WTC11 (cell line): ENCODE measurements at regions of chr1 and their contacts with region 1.

Region 1: GRCh38 chr1:205658943-205659581 is 21.2 kb downstream of the SLC45A3 start:
- DNase-seq: peak; percentile 91
- ATAC-seq: peak; percentile 84
- H3K4me3 Mint-ChIP-seq: no peak overlapping the region
- H3K27ac Mint-ChIP-seq: peak overlapping the region; percentile 88; the same call in 1 of the 2 replicates
- H3K4me1 Mint-ChIP-seq: peaks cover 35% of the 10 kb centered on the region
- H3K27me3 Mint-ChIP-seq: no peaks in the 10 kb centered on the region
- CTCF ChIP-seq: peak; percentile 83

Region 2: DNA sequence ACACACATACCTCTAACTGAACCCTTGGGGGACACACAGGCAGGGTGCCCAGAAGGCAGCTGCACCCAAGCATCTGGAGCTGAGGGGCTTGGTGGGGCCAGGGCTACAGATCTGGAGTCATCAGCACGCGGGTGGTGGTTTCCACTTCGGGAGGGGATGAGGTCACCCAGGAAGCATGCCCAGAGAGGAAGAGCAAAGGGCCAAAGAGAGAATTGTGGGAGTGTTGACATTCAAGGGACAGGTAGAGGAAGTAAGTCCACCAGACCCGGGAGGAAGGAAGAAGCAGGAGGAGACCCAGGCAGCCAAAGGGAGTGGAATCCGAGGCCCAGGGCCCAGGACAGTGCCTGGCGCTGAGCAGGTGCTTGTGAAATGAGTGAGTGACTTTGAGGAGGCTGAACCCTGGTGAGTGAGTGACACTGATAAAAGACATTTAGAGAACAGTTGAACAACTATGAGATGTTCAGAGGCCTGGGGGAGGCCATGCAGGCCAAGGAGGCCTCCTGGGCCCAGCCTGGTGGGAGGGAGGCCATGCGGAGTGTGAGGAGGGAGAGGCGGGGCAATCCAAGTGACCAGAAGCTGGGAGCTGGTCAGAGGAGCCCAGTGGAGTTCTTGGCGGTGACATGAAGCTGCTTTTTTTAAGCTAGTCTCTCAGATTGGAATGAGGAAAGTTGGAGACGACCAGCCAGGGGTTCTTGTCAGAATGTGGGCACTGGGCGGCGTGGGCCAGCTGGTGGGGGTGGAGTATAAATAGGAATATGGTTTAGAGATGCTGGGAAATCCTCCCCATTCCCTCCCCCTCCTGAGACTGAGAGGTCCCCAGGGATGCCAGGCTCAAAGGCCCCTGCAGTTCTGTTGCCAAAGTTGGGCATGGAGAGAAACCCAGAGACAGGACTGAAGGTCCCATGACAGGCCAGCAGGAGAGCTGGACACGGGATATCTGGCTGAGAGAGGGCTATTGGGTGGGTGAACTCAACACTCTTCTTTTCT is 146.7 kb before region 1 on chr1:
- CTCF ChIA-PET with region 1: no interaction called
- POLR2A ChIA-PET with region 1: no interaction called
- DNase-seq: no peak
- ATAC-seq: no peak
- H3K4me3 Mint-ChIP-seq: no peak overlapping the region
- H3K27ac Mint-ChIP-seq: peak overlapping the region; percentile 51
- H3K4me1 Mint-ChIP-seq: peaks cover 53% of the 10 kb centered on the region
- H3K27me3 Mint-ChIP-seq: no peaks in the 10 kb centered on the region
- CTCF ChIP-seq: no peak

Region 3: DNA sequence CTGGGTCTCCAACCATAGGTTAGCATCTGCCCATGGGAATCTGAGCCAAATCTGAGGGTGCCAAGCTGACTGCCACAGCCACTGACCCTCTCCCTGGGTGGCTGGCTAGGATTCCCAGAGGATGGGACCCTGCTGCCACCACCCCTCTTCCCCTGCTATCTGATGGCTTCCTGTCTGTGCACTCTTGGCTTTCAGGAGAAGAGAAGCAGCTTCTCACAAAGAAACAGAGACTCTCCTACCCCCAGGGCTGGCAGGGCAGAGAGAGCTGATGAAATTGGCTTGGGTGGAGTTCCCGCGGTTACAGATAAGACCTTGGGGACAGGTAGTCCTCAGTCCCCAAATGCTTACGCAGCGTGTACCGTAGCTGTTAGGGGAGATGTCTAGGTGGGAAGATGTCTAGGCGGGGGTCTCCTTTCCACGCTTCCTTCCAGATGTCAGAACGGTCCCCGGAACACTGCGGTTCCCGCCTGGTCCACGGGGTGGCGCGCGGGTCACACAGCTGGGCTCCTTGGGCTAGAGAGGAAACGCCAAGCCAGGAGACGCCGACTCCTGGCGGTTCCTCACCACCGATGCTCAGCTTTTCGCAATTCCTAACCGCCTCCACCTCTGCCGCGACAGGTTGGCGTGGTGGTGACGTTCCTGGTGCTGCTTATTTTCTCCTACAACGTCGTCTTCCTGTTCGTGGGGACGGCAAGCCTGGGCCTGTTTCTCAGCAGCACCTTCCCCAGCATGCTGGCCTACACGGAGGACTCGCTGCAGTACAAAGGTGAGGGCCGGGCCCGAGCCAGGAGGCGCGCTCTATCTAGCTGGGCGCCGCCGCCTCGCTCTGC is 67.3 kb before region 1 on chr1:
- CTCF ChIA-PET with region 1: interaction called, 265 read pairs
- POLR2A ChIA-PET with region 1: interaction called, 16 read pairs
- DNase-seq: peak; percentile 97
- ATAC-seq: peak; percentile 86
- H3K4me3 Mint-ChIP-seq: peak overlapping the region; percentile 72
- H3K27ac Mint-ChIP-seq: peak overlapping the region; percentile 50; the same call in 1 of the 2 replicates
- H3K4me1 Mint-ChIP-seq: peaks cover 8% of the 10 kb centered on the region
- H3K27me3 Mint-ChIP-seq: peaks cover 10% of the 10 kb centered on the region
- CTCF ChIP-seq: peak; percentile 78

Region 4: DNA sequence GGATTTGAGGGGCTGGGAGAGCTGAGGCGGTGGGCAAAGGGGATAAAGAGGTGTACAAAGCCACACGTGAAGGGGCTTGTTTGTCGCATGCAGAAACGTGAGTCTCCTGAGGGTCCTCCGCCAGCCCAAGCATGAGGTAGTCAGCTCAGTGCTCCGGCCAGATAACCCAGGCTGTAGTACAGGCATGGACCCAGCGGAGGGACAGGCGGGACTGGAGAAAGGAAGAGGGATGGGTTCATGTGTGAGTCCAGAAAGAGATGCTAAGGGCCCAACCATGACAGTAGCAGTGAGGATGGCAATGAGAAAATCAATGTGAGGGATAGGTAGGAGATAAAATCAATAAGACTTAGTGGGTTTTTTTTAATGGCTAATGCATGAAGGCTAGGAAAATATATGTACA is 13.5 kb before region 1 on chr1:
- CTCF ChIA-PET with region 1: interaction called, 39 read pairs
- POLR2A ChIA-PET with region 1: no interaction called
- DNase-seq: no peak
- ATAC-seq: peak; percentile 68
- H3K4me3 Mint-ChIP-seq: no peak overlapping the region
- H3K27ac Mint-ChIP-seq: 0 out of 2 replicates have a peak overlapping the region, but pooled peaks have one; percentile 30
- H3K4me1 Mint-ChIP-seq: peaks cover 24% of the 10 kb centered on the region
- H3K27me3 Mint-ChIP-seq: no peaks in the 10 kb centered on the region
- CTCF ChIP-seq: no peak

Region 5: DNA sequence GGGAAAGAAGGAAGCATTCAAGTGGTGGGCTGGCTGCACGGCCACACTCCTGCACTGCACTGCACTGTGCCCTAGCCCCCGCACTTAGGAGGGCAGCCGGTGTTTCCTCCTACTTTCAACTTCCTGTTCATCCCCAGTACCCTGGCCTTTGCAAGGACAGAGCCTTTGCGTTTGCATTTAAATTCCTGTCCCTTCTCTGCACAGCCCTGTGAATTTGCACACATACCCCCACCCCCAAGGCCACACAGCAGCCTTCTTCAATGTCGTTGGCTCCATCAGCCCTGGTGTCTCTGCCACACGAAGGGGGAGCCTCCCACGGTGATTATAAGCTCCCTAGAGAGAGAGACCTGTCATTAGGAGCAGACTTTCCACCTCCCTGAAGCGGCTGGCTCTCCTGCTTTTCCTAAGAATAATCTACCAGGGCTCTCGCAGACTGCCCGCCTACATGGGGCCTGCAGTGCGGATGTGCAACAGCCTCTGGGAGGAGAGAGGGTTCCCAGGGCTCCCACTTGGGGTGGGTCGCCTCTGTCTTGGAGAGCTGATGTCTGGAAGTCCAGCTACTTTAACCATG is 34.4 kb after region 1 on chr1:
- CTCF ChIA-PET with region 1: interaction called, 40 read pairs
- POLR2A ChIA-PET with region 1: interaction called, 3 read pairs
- DNase-seq: no peak
- ATAC-seq: peak; percentile 53
- H3K4me3 Mint-ChIP-seq: no peak overlapping the region
- H3K27ac Mint-ChIP-seq: peak overlapping the region; percentile 24; the same call in 1 of the 2 replicates
- H3K4me1 Mint-ChIP-seq: peaks cover 20% of the 10 kb centered on the region
- H3K27me3 Mint-ChIP-seq: no peaks in the 10 kb centered on the region
- CTCF ChIP-seq: no peak

Region 6: DNA sequence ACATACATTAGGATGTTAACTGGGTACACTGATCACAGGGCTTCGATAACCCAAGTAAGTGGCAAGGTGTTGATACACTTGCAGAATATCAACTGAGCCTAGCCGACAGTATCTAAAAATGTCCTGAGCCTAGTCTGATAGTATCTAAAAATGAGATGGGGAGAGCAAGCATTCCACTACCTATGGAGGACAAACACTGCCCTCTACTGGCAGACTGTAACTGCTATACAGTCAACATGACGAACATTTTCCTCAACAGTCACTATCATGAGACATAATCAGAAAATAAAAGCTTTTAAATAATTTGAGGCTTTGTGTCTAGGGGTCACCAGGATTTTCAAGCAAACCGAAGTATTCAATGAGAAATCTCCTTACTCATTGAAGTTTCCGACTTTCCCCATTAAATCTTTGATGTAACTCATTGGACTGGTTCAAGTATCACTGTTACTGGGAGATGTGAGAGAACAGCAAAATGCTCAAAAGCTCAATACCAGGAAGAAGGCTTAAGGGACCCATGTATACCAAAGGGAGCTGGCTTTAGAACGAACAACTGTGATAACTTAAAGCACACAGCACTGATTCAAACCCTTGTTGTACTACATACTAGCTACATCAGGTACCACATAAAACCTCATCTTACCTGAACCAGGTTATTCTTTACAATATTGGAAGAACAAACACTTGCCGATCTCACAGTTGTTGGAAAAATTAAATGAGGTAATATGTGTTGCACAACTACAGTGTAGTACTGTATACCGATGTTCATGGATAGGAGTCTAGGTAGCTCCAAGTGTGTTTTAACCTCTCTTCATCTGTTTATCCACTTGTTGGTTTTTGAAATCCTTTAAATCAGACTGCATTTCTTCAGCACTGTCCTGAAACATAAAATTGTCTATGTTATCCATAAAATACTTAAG is 52.3 kb after region 1 on chr1:
- CTCF ChIA-PET with region 1: interaction called, 468 read pairs
- POLR2A ChIA-PET with region 1: interaction called, 21 read pairs
- DNase-seq: peak; percentile 65
- ATAC-seq: peak; percentile 87
- H3K4me3 Mint-ChIP-seq: no peak overlapping the region
- H3K27ac Mint-ChIP-seq: peak overlapping the region; percentile 77
- H3K4me1 Mint-ChIP-seq: peaks cover 36% of the 10 kb centered on the region
- H3K27me3 Mint-ChIP-seq: no peaks in the 10 kb centered on the region
- CTCF ChIP-seq: peak; percentile 75

Region 7: GRCh38 chr1:205791568-205792180 is 132.6 kb after region 1 on chr1:
- CTCF ChIA-PET with region 1: interaction called, 10 read pairs
- POLR2A ChIA-PET with region 1: no interaction called
- DNase-seq: peak; percentile 70
- ATAC-seq: peak; percentile 96
- H3K4me3 Mint-ChIP-seq: no peak overlapping the region
- H3K27ac Mint-ChIP-seq: no peak overlapping the region
- H3K4me1 Mint-ChIP-seq: 0 out of 2 replicates have a peak, but pooled peaks cover 6% of the 10 kb centered on the region
- H3K27me3 Mint-ChIP-seq: no peaks in the 10 kb centered on the region
- CTCF ChIP-seq: peak; percentile 73